HEK293 (cell line): ENCODE measurements at regions of chr16 and their contacts with region 1.

Region 1: GRCh38 chr16:30637942-30638341 is 12.8 kb upstream of the PRR14 start:
- H3K4me3 ChIP-seq: no peak overlapping the region
- H3K27ac ChIP-seq: no peak overlapping the region
- H3K4me1 ChIP-seq: 0 out of 2 replicates have a peak, but pooled peaks cover 2% of the 10 kb centered on the region
- CTCF ChIP-seq: peak; percentile 75

Region 2: GRCh38 chr16:30417529-30418349 is 220.2 kb before region 1 on chr16:
- CTCF ChIA-PET with region 1: interaction called, 3 read pairs
- POLR2A ChIA-PET with region 1: interaction called, 11 read pairs
- H3K4me3 ChIP-seq: peak overlapping the region; percentile 37
- H3K27ac ChIP-seq: peak overlapping the region; percentile 85
- H3K4me1 ChIP-seq: peaks cover 12% of the 10 kb centered on the region
- CTCF ChIP-seq: peak; percentile 89

Region 3: GRCh38 chr16:30541502-30542329 is 96.2 kb before region 1 on chr16:
- CTCF ChIA-PET with region 1: no interaction called
- POLR2A ChIA-PET with region 1: interaction called, 10 read pairs
- H3K4me3 ChIP-seq: no peak overlapping the region
- H3K27ac ChIP-seq: no peak overlapping the region
- H3K4me1 ChIP-seq: peaks cover 6% of the 10 kb centered on the region; the same call in 1 of the 2 replicates
- CTCF ChIP-seq: no peak

Region 4: GRCh38 chr16:30557957-30558788 is 79.8 kb before region 1 on chr16 and contains the start of gene ZNF764:
- CTCF ChIA-PET with region 1: no interaction called
- POLR2A ChIA-PET with region 1: interaction called, 10 read pairs
- H3K4me3 ChIP-seq: peak within 1 kb of the TSS; percentile 88
- H3K27ac ChIP-seq: peak within 1 kb of the TSS; percentile 98
- H3K4me1 ChIP-seq: peaks cover 2% of the 10 kb centered on the region; the same call in 1 of the 2 replicates
- CTCF ChIP-seq: peak; percentile 84

Region 5: DNA sequence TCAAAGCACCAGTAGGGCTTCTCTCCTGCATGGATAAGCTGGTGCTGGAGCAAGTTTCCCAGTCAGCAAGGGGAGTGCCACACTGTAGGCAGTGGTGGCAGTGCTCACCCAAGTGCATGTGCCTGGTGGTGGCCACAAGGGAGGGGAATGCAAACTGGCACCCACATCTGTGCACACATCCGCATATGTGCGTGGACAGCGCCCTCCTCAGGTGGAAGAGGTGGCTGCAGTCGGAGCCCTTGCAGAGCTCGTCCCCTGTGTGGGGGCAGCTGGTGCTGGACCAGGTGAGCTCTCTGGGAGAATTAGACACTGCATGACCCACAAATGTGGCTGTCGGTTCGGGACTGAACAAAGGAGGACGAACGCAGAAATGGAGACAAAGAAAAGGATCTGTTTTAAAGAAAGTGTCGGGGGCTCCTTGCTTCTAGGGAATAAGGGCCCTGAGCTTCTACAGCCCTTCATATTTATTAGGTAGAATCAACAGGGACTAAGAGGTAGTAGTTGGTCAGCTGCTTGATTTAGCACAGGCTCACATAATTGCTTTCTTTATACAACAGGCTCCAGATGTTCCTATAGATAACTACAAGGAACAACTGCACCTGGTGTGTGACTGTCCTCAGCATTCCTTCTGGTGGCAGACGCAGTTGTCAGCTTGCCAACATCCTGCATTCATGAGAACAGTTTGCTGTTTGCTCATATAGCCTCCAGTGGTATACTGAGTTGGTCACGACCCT is 22.4 kb before region 1 on chr16:
- CTCF ChIA-PET with region 1: interaction called, 12 read pairs
- POLR2A ChIA-PET with region 1: interaction called, 6 read pairs
- H3K4me3 ChIP-seq: no peak overlapping the region
- H3K27ac ChIP-seq: no peak overlapping the region
- H3K4me1 ChIP-seq: no peaks in the 10 kb centered on the region
- CTCF ChIP-seq: peak; percentile 95

Region 6: DNA sequence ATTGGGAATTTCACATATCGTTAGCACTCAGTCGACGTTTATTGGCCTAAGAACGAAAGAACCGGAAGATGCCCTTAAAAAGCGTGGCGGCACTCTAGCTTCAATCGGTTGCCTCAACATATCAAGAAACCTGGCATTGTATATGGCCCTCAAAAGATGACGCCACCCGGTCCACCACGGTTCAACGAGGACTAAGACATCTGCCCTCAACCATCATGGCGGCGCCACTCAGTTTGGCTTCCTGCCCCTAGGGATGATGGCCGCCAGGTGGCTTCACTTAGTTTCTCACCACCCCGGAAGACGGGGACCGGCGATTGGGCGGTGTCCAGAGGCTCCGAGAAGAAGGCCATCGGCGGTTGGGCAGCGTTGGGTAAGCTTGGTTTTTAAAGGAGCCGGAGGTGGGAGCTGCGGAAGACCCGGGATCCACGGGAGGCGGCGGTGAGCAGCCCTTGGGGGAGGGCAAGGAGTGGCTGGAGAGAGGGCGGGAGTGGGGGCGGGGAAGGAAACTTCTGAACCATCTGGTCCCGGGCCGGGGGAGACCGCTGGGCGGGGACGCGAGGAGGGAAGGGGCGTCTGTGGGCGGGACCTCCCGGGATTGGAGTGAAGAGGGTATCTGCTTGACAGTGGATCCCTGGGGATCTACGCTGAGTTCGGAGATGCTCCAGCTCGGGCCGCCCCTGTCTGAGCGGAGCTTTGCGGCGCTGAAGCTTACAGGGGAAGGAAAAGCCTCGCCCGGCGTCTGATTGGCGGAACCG is 12.6 kb after region 1 on chr16 and contains the start of gene PRR14:
- CTCF ChIA-PET with region 1: interaction called, 9 read pairs
- POLR2A ChIA-PET with region 1: interaction called, 21 read pairs
- H3K4me3 ChIP-seq: peak within 1 kb of the TSS; percentile 80
- H3K27ac ChIP-seq: peak within 1 kb of the TSS; percentile 91
- H3K4me1 ChIP-seq: no peaks in the 10 kb centered on the region
- CTCF ChIP-seq: peak; percentile 87

Region 7: DNA sequence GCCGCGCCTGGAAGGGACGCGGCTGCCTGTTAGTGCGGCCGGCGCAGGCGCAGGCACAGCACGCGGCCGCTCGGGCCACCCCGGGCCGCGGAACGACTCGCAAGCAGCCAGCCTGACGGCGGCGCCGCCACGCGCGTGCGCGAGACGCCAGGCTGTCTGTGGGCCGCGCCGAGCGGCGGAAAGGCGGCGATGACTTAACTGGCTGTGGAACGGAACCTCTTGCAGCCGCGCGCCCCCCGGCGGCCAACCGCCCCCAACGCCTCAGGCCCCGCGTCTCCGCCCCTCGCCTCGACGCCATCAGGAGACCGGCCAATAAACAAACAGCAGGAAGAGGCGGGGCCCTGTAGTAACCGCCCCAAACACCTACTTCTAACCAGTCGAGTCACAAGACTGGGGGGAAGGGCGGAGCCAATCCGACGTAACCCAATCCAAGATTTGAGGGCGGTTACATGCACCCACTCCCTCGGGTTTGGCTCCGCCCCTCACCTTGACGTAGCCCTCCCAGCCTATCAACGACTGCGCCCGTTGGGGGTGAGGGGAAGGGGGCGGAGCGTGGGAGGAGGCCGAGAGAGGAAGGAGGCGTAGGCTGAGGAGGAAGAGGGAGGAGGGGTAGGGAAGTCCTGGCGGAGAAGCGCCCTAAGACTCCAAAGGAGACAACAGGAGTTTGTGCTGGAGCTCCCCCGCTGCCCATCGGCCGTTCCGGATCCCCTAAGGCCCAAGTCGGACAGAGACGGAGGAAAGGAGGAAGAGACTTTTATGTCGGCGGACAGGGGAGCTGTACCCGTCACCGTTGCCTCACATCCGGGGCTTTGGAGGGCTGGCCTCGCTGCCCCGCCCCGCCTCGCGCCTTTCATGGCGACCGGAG is 20.2 kb after region 1 on chr16 and contains the start of gene FBRS:
- CTCF ChIA-PET with region 1: interaction called, 4 read pairs
- POLR2A ChIA-PET with region 1: interaction called, 14 read pairs
- H3K4me3 ChIP-seq: peak within 1 kb of the TSS; percentile 91
- H3K27ac ChIP-seq: peak within 1 kb of the TSS; percentile 95
- H3K4me1 ChIP-seq: peaks cover 7% of the 10 kb centered on the region
- CTCF ChIP-seq: peak; percentile 99

Region 8: GRCh38 chr16:30844671-30845449 is 206.9 kb after region 1 on chr16:
- CTCF ChIA-PET with region 1: no interaction called
- POLR2A ChIA-PET with region 1: no interaction called
- H3K4me3 ChIP-seq: no peak overlapping the region
- H3K27ac ChIP-seq: no peak overlapping the region
- H3K4me1 ChIP-seq: no peaks in the 10 kb centered on the region
- CTCF ChIP-seq: peak; percentile 91